MCF 10A (cell line): ENCODE measurements at regions of chr15 and their contacts with region 1.

Region 1: DNA sequence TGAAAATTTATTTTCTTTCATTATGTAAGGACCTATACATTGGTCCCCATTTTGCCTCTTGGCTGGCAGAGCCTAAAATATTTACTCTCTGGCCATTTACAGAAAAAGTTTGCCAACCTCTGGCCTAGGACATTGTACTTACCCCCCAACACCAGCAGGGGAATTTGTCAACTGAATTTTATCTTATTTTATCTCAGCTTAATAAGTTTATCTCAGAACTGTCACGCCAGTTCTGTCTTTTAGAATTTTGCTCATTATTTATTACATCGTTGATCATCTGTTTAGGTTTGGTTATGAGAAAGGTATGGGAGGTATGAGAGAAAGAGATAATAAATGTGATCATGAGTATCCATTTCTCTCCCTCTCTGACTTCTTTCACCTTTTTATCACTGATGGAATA is 38.3 kb downstream of the CHD2 start:
- DNase-seq: no peak
- H3K4me3 Mint-ChIP-seq: no peak overlapping the region
- H3K27ac Mint-ChIP-seq: no peak overlapping the region
- H3K4me1 Mint-ChIP-seq: no peaks in the 10 kb centered on the region
- H3K27me3 Mint-ChIP-seq: no peaks in the 10 kb centered on the region
- CTCF ChIP-seq: peak; percentile 16

Region 2: GRCh38 chr15:92952458-92952850 is 14.1 kb after region 1 on chr15:
- CTCF ChIA-PET with region 1: interaction called, 5 read pairs
- POLR2A ChIA-PET with region 1: interaction called, 13 read pairs
- intact Hi-C with region 1: no loop called
- DNase-seq: no peak
- H3K4me3 Mint-ChIP-seq: no peak overlapping the region
- H3K27ac Mint-ChIP-seq: no peak overlapping the region
- H3K4me1 Mint-ChIP-seq: no peaks in the 10 kb centered on the region
- H3K27me3 Mint-ChIP-seq: no peaks in the 10 kb centered on the region
- CTCF ChIP-seq: no peak

Region 3: DNA sequence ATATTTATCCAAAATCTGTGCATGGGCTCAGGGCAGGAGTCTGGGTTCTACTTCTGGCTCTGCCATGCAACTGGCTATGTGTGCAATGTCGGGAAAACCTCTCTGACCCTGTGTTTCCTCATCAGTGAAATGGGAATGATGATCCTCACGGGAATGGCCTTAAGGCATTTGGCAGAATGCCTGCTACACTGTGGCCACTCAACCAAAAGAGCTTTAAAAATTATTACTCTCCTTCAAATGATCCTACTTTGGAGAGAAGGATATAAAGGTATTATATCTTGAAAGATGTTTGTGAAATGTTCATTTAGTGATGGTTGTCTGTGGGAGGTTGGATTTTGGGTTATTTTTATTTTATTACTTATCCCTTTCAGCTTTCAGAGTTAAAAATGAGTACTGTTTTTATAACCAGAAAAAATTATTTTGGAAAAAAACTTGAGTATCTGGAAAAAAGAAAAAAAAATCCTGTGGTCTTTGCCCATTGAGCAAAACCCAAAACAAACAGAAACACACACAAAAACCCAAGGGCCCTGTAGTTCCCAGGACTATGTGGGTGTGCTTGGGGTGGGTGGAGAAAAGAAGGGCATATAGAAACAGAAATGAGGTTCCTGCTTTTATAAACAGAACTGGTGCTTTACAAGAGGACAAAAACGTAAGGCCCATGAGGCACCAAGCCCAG is 128.6 kb after region 1 on chr15:
- CTCF ChIA-PET with region 1: no interaction called
- POLR2A ChIA-PET with region 1: no interaction called
- intact Hi-C with region 1: no loop called
- DNase-seq: peak; percentile 72
- H3K4me3 Mint-ChIP-seq: no peak overlapping the region
- H3K27ac Mint-ChIP-seq: no peak overlapping the region
- H3K4me1 Mint-ChIP-seq: peaks cover 10% of the 10 kb centered on the region
- H3K27me3 Mint-ChIP-seq: no peaks in the 10 kb centered on the region
- CTCF ChIP-seq: no peak